ENCODE measurements at regions of chr12 and their contacts with region 1.

Region 1: DNA sequence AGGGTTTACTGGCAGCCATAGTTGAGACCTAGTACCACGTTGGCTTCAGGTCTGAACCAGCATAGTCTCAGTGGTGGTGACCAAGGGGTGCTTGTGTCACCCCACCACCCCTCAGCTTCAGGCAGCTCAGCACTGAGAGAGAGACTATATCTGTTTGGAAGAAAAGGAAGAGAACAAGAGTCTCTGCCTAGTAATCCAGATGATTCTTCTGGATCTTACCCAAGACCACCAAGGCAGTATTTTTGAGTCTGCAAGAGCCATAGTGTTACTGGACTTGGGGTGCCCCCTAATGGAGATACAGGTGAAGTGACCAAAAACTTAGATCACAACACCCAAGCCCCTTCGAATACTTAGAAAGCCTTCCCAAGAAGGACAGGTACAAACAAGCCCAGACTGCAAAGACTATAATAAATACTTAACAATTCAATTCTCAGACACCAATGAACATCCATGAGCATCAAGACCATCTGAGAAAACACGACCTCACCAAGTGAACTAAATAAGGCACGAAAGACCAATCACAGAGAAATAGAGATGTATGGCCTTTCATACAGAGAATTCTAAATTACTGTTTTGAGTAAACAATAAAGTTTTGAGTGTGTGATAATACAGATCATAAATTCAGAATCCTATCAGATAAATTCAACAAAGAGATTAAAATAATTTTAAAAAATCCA is 107.0 kb downstream of the HELB start:
- DNase-seq: peak; percentile 24
- H3K4me3 ChIP-seq: no peak overlapping the region; a peak in 1 of 4 replicates
- H3K27ac ChIP-seq: no peak overlapping the region; a peak in 1 of 4 replicates
- H3K4me1 ChIP-seq: peaks cover 8 to 20% of the 10 kb centered on the region in 2 experiments; a peak in 3 of 4 replicates
- H3K27me3 ChIP-seq: no peaks in the 10 kb centered on the region
- CTCF ChIP-seq: peak; percentile 79
- EP300 ChIP-seq: no peak
- RAD21 ChIP-seq: peak; percentile 92

Region 2: GRCh38 chr12:66269757-66270383 is 139.5 kb before region 1 on chr12:
- CTCF ChIA-PET with region 1: interaction called, 25 read pairs
- POLR2A ChIA-PET with region 1: no interaction called
- DNase-seq: peak; percentile 45
- H3K4me3 ChIP-seq: no peak overlapping the region
- H3K27ac ChIP-seq: no peak overlapping the region
- H3K4me1 ChIP-seq: no peaks in the 10 kb centered on the region; a peak in 1 of 4 replicates
- H3K27me3 ChIP-seq: no peaks in the 10 kb centered on the region; the same call in 1 of the 2 replicates
- CTCF ChIP-seq: peak; percentile 82
- EP300 ChIP-seq: no peak
- RAD21 ChIP-seq: peak; percentile 74

Region 3: GRCh38 chr12:66365718-66366490 is 43.4 kb before region 1 on chr12:
- CTCF ChIA-PET with region 1: interaction called, 16 read pairs
- POLR2A ChIA-PET with region 1: no interaction called
- DNase-seq: no peak
- H3K4me3 ChIP-seq: no peak overlapping the region
- H3K27ac ChIP-seq: no peak overlapping the region
- H3K4me1 ChIP-seq: peaks cover 0 to 21% of the 10 kb centered on the region in 2 experiments; a peak in 1 of 4 replicates
- H3K27me3 ChIP-seq: no peaks in the 10 kb centered on the region
- CTCF ChIP-seq: no peak
- EP300 ChIP-seq: no peak
- RAD21 ChIP-seq: no peak

Region 4: DNA sequence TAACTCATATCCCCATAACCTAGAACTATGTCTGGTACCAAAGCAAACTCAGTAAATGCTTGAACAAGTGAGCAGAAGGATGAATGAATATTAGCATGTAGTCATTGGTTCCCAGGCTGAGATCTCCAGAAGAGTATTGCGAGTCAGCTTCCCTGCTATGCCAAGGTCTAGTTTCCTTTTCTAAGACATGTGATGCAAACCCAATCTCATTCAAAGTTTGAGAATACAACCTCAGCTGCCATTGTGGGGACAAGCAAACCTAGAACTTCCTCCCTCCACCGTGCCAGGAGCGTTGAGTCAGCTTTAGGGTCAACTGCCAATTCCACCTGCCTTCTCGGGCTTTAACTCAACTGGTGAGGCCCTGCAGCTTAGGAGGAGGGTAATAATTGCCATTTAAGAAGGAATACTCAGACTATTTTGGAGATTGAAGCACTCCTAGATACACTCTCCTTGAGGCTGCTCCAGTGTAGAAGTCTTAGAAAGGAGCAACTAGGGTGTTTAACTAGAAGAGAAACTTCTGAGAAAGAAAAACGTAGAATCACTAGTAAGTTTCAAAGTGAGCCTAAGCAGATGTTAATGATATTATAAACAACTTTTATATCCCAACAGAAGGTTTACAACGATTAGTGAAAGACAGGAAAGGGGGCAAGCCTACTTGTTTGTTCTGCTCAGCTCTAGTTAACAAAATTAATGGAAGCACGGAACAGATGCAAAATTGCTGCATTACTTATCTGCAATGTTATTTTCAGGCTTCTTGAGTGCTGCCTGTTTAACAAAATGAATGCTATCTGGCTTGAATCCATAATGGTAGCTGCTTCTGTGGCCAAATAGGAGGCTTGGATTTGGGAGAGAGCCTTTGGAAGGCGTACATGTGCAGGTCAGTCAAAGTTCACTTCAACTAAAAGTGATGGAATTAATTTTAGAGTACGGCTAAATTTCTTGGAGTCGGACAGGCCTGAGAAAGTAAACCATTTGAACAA is 10.1 kb before region 1 on chr12:
- CTCF ChIA-PET with region 1: interaction called, 12 read pairs
- POLR2A ChIA-PET with region 1: no interaction called
- DNase-seq: no peak
- H3K4me3 ChIP-seq: no peak overlapping the region
- H3K27ac ChIP-seq: peak overlapping the region in 1 of 2 experiments; percentile 79; a peak in 2 of 4 replicates
- H3K4me1 ChIP-seq: peaks cover 0 to 21% of the 10 kb centered on the region in 2 experiments; a peak in 2 of 4 replicates
- H3K27me3 ChIP-seq: no peaks in the 10 kb centered on the region
- CTCF ChIP-seq: no peak
- EP300 ChIP-seq: 0 out of 4 replicates have a peak, but pooled peaks of 1 of the 2 experiments have one; percentile 41
- RAD21 ChIP-seq: no peak

Region 5: GRCh38 chr12:66430106-66430505 is 20.8 kb after region 1 on chr12:
- CTCF ChIA-PET with region 1: no interaction called
- POLR2A ChIA-PET with region 1: no interaction called
- DNase-seq: no peak
- H3K4me3 ChIP-seq: no peak overlapping the region
- H3K27ac ChIP-seq: no peak overlapping the region
- H3K4me1 ChIP-seq: no peaks in the 10 kb centered on the region
- H3K27me3 ChIP-seq: peaks cover 14% of the 10 kb centered on the region; the same call in 1 of the 2 replicates
- CTCF ChIP-seq: no peak
- EP300 ChIP-seq: no peak
- RAD21 ChIP-seq: no peak

Measured in SK-N-SH (cell line).